Mammary epithelial cell (primary cell): ENCODE measurements at regions of chr2 and their contacts with region 1.

Region 1: DNA sequence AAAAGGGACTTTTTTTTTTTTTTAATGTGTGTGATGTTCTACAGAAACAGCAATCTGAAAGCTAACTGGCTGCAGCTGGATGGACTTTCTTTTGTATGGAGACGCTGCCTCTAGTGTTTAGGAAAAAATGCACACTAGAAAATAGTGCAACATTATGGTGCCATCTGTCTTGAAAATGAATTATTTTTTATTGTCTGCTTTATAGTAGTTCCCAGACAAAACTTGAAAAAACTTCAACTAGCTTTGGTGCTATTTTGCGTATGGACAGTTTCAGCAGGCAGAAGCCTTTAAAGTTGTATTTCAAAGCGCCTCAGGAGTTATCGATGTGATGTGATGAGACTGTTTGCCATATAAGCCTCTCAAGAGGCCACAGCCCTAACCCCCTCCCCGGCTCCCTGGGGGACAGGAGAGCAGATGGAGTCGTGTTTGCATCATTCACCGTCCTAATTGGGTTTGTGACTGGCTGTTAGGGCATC is 86.9 kb downstream of the LTBP1 start:
- DNase-seq: peak; percentile 42
- H3K4me3 ChIP-seq: peak overlapping the region in 2 of 3 experiments; percentile 8 to 30
- H3K27ac ChIP-seq: no peak overlapping the region
- H3K4me1 ChIP-seq: peaks cover 25% of the 10 kb centered on the region
- H3K27me3 ChIP-seq: no peaks in the 10 kb centered on the region
- CTCF ChIP-seq: peak; percentile 72 to 78

Region 2: GRCh38 chr2:32553829-32554432 is 479.7 kb before region 1 on chr2:
- CTCF ChIA-PET with region 1: no interaction called
- dilution Hi-C with region 1: no loop called
- in situ Hi-C with region 1: no loop called
- intact Hi-C with region 1: loop called (anchors 5 kb)
- DNase-seq: peak; percentile 6
- H3K4me3 ChIP-seq: no peak overlapping the region
- H3K27ac ChIP-seq: no peak overlapping the region
- H3K4me1 ChIP-seq: no peaks in the 10 kb centered on the region
- H3K27me3 ChIP-seq: no peaks in the 10 kb centered on the region
- CTCF ChIP-seq: peak; percentile 53 to 72

Region 3: DNA sequence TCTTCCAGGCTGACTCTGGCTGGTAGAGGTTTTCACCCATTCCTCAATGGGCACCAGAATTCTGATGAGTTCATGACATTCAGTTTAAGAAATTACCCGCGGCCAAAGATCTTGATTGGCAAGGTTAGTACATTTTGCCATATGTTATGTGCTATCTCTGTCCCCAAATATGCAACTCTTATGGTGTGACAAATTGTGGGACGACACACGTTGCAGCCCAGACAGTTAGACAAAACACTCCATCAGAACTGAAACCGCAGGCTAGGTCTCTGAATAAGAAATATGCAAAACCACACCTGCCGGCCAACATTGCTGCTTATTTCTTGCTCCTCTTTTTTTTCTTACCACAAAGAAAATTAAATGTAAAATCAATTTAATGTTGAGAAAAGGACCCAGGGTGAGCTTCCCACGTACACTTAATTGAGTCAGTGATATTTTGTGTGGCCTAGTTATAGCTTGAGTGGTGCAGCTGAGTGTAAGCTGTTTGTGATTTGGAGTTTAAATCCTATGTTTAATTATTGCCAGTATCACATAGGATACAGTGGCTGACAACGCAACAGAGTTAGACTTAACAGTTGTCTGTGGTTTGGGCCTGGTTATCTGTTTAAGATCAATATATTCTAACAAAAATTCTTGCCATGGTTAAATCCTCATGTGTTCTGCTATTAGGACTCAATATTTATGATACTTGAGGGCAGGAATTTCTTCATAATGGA is 122.6 kb before region 1 on chr2:
- CTCF ChIA-PET with region 1: no interaction called
- dilution Hi-C with region 1: no loop called
- in situ Hi-C with region 1: no loop called
- intact Hi-C with region 1: no loop called
- DNase-seq: no peak
- H3K4me3 ChIP-seq: no peak overlapping the region
- H3K27ac ChIP-seq: no peak overlapping the region
- H3K4me1 ChIP-seq: no peaks in the 10 kb centered on the region
- H3K27me3 ChIP-seq: no peaks in the 10 kb centered on the region
- CTCF ChIP-seq: no peak

Region 4: GRCh38 chr2:32946314-32947075 is 87.1 kb before region 1 on chr2 and contains the start of gene LTBP1:
- CTCF ChIA-PET with region 1: no interaction called
- dilution Hi-C with region 1: no loop called
- in situ Hi-C with region 1: no loop called
- intact Hi-C with region 1: loop called (anchors 1 kb)
- DNase-seq: peak; percentile 66
- H3K4me3 ChIP-seq: peak within 1 kb of the TSS; percentile 58 to 66 (median 63)
- H3K27ac ChIP-seq: no peak within 1 kb of the TSS
- H3K4me1 ChIP-seq: peaks cover 9% of the 10 kb centered on the region
- H3K27me3 ChIP-seq: no peaks in the 10 kb centered on the region
- CTCF ChIP-seq: peak; percentile 58 to 90
- total RNA-seq, gene LTBP1: 20.9 to 80.2 TPM

Region 5: GRCh38 chr2:33134086-33134771 is 100.6 kb after region 1 on chr2:
- CTCF ChIA-PET with region 1: no interaction called
- dilution Hi-C with region 1: no loop called
- in situ Hi-C with region 1: no loop called
- intact Hi-C with region 1: loop called (anchors 5 kb)
- DNase-seq: peak; percentile 96
- H3K4me3 ChIP-seq: peak overlapping the region; percentile 4 to 28 (median 14)
- H3K27ac ChIP-seq: peak overlapping the region; percentile 9
- H3K4me1 ChIP-seq: peaks cover 37% of the 10 kb centered on the region
- H3K27me3 ChIP-seq: no peaks in the 10 kb centered on the region
- CTCF ChIP-seq: peak; percentile 15 to 18

Region 6: GRCh38 chr2:33372940-33373553 is 339.4 kb after region 1 on chr2:
- CTCF ChIA-PET with region 1: no interaction called
- dilution Hi-C with region 1: no loop called
- in situ Hi-C with region 1: loop called (anchors 10 kb)
- intact Hi-C with region 1: loop called (anchors 1 kb)
- DNase-seq: peak; percentile 43
- H3K4me3 ChIP-seq: no peak overlapping the region
- H3K27ac ChIP-seq: no peak overlapping the region
- H3K4me1 ChIP-seq: no peaks in the 10 kb centered on the region
- H3K27me3 ChIP-seq: no peaks in the 10 kb centered on the region
- CTCF ChIP-seq: peak; percentile 76 to 81

Region 7: GRCh38 chr2:33583194-33583938 is 549.7 kb after region 1 on chr2:
- CTCF ChIA-PET with region 1: no interaction called
- dilution Hi-C with region 1: no loop called
- in situ Hi-C with region 1: loop called (anchors 25 kb)
- intact Hi-C with region 1: loop called (anchors 5 kb)
- DNase-seq: peak; percentile 7
- H3K4me3 ChIP-seq: no peak overlapping the region
- H3K27ac ChIP-seq: no peak overlapping the region
- H3K4me1 ChIP-seq: no peaks in the 10 kb centered on the region
- H3K27me3 ChIP-seq: no peaks in the 10 kb centered on the region
- CTCF ChIP-seq: peak; percentile 71 to 85